ENCODE measurements at regions of chr12 and their contacts with region 1.

Region 1: GRCh38 chr12:107679336-107679735 is 6.3 kb upstream of the PWP1 start:
- DNase-seq: no peak
- H3K4me3 ChIP-seq: no peak overlapping the region
- H3K27me3 ChIP-seq: peaks cover 7% of the 10 kb centered on the region
- CTCF ChIP-seq: no peak

Region 2: GRCh38 chr12:107884769-107885694 is 205.7 kb after region 1 on chr12:
- CTCF ChIA-PET with region 1: interaction called, 22 read pairs
- POLR2A ChIA-PET with region 1: no interaction called
- DNase-seq: no peak
- H3K4me3 ChIP-seq: no peak overlapping the region
- H3K27me3 ChIP-seq: no peaks in the 10 kb centered on the region; the same call in 1 of the 2 replicates
- CTCF ChIP-seq: peak; percentile 80